PC-9 (cell line): ENCODE measurements at regions of chr7 and their contacts with region 1.

Region 1: GRCh38 chr7:2956526-2957368 is 86.9 kb downstream of the CARD11 start:
- DNase-seq: peak; percentile 84 to 94
- H3K4me3 ChIP-seq: no peak overlapping the region
- H3K27ac ChIP-seq: peak overlapping the region; percentile 91
- H3K4me1 ChIP-seq: peaks cover 27% of the 10 kb centered on the region
- H3K27me3 ChIP-seq: no peaks in the 10 kb centered on the region
- CTCF ChIP-seq: no peak

Region 2: DNA sequence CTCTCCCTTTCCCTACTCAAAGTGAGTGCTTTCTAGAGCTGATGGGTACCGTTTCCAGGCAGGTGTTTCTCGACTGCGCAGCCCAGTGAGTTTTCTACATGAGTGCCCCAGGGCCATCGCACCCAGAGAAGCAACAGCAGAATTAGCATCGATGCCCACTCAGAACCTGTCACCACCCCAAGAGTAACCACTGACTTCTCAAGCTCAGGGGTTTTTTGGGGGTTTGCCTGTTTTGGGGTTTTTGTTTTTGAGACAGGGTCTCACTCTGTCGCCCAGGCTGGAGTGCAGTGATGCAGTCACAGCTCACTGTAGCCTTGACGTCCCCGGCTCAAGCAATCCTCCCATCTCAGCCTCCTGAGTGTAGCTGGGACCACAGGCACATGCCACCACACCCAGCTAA is 668.2 kb before region 1 on chr7:
- CTCF ChIA-PET with region 1: no interaction called
- POLR2A ChIA-PET with region 1: interaction called, 22 read pairs
- intact Hi-C with region 1: no loop called
- DNase-seq: no peak
- H3K4me3 ChIP-seq: no peak overlapping the region
- H3K27ac ChIP-seq: no peak overlapping the region
- H3K4me1 ChIP-seq: no peaks in the 10 kb centered on the region
- H3K27me3 ChIP-seq: no peaks in the 10 kb centered on the region
- CTCF ChIP-seq: no peak

Region 3: DNA sequence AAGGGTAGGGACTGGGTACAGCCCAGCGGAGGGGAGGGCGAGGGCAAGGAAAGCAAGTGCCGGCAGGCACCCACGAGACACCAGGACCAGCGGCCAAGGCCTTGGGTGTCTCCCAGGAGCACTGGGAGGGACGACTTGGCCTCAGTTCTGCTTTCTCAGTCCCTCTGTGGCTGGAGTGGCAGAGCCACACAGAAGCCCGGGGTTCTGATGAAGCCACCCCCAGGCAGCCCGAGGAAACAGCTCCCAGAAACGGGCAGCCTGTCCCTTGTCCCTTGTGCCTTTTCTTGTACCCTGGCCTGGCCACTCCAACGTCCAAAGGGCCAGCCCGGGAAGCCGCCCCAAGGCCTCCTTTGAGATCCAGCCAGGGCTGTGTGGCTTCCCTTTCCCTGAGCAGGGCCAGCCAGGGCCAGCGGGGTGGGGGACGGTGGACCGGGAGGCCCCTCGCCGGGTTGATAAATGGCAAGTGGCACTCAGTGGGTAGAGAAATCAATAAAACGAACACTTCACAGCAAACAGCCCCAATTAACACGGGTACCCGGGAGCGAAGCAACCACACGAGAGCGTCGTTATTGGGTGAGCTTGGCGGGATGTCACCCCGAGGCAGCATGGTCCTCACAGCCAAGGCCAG is 42.9 kb before region 1 on chr7:
- CTCF ChIA-PET with region 1: no interaction called
- POLR2A ChIA-PET with region 1: no interaction called
- intact Hi-C with region 1: no loop called
- DNase-seq: peak in 1 of 2 experiments; percentile 28
- H3K4me3 ChIP-seq: no peak overlapping the region
- H3K27ac ChIP-seq: no peak overlapping the region
- H3K4me1 ChIP-seq: no peaks in the 10 kb centered on the region
- H3K27me3 ChIP-seq: no peaks in the 10 kb centered on the region
- CTCF ChIP-seq: no peak

Region 4: DNA sequence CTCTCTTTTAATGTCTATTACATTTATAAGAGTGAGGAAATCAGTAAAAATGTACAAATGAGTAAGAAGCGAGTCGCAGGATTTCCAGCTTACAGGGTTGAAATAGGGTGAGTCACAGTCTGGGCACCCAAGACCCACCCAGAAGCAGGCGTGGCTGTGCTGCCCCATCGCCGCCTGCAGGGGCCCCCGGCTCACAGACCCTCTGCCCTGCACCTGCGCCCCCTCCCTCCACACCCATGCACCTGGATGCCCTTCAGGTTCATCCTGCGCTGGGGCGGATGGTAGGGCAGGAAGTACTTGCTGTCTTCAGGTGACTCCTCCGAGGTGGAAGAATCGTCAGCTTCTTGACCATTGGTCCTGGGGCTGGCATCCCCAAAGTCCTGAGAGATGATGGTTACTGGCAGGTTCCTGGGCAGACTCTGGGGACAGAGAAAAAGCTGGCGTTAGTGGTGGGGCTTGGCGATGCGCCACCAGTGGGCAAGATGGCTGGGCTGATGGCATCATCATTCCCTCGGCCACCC is 22.5 kb before region 1 on chr7:
- CTCF ChIA-PET with region 1: interaction called, 3 read pairs
- POLR2A ChIA-PET with region 1: no interaction called
- intact Hi-C with region 1: loop called (anchors 1 kb)
- DNase-seq: peak; percentile 63 to 77
- H3K4me3 ChIP-seq: no peak overlapping the region
- H3K27ac ChIP-seq: peak overlapping the region; percentile 81
- H3K4me1 ChIP-seq: peaks cover 13% of the 10 kb centered on the region
- H3K27me3 ChIP-seq: no peaks in the 10 kb centered on the region
- CTCF ChIP-seq: peak; percentile 61; the same call in 1 of the 2 replicates

Region 5: GRCh38 chr7:3028071-3028757 is 71.5 kb after region 1 on chr7:
- CTCF ChIA-PET with region 1: no interaction called
- POLR2A ChIA-PET with region 1: no interaction called
- intact Hi-C with region 1: loop called (anchors 5 kb)
- DNase-seq: peak; percentile 77 to 91
- H3K4me3 ChIP-seq: peak overlapping the region; percentile 39; the same call in 1 of the 2 replicates
- H3K27ac ChIP-seq: peak overlapping the region; percentile 85
- H3K4me1 ChIP-seq: peaks cover 25% of the 10 kb centered on the region
- H3K27me3 ChIP-seq: no peaks in the 10 kb centered on the region
- CTCF ChIP-seq: no peak